ENCODE measurements at regions of chr1 and their contacts with region 1.

Region 1: DNA sequence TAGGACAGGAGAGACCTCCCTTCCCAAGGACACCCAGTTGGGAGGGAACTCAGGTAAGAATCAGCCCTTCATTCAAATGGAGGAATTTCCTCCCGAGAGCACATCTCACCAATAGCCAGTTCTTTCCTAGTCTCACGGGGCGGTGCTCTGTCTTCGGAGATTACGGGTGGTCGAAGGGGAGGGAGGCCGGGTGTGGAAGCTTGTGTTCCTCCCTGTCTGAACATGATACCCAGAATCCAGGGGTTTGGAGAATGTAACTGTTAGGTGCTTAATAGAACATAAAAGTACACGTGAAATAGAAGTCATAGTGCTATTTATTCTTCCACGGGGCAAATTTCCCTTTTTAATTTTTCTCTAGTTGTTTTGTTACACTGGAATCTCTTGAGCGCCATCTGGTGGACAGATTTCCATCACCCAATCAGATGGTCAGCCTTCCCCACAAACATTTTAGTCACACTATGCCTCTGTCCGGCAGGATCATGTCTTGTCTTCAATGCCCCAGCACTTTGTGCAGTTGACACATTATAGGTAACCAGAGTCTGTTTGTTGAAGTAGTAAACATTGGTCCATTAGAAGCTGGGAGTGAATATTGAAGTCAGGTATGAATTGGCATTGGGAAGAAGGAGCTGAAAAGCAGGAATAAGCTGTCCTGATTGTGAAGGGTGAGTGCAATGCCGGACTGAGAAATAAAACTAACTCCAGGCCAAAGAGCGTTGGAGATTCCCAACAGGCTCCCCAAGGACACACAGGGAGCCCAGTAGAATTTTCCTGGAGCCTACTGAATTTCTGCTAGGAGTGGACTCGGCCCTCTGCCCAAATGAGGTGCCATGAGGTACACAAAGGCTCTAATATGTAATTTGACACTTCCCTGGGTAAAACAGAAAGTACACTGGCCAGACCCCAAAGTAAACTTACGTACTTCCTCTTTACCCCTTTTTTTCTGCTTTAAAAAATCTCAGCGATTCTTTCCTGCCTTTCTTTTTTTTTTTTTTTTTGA is 27.6 kb upstream of the ZNF697 start:
- DNase-seq: no peak
- H3K4me3 ChIP-seq: peak overlapping the region; percentile 37
- H3K27me3 ChIP-seq: peaks cover 1% of the 10 kb centered on the region
- CTCF ChIP-seq: peak; percentile 82

Region 2: GRCh38 chr1:119613769-119614720 is 61.6 kb before region 1 on chr1:
- CTCF ChIA-PET with region 1: interaction called, 77 read pairs
- POLR2A ChIA-PET with region 1: no interaction called
- DNase-seq: no peak
- H3K4me3 ChIP-seq: no peak overlapping the region
- H3K27me3 ChIP-seq: no peaks in the 10 kb centered on the region
- CTCF ChIP-seq: peak; percentile 77

Region 3: GRCh38 chr1:119656410-119656955 is 19.2 kb before region 1 on chr1:
- CTCF ChIA-PET with region 1: interaction called, 100 read pairs
- POLR2A ChIA-PET with region 1: no interaction called
- DNase-seq: no peak
- H3K4me3 ChIP-seq: no peak overlapping the region
- H3K27me3 ChIP-seq: no peaks in the 10 kb centered on the region
- CTCF ChIP-seq: no peak

Region 4: DNA sequence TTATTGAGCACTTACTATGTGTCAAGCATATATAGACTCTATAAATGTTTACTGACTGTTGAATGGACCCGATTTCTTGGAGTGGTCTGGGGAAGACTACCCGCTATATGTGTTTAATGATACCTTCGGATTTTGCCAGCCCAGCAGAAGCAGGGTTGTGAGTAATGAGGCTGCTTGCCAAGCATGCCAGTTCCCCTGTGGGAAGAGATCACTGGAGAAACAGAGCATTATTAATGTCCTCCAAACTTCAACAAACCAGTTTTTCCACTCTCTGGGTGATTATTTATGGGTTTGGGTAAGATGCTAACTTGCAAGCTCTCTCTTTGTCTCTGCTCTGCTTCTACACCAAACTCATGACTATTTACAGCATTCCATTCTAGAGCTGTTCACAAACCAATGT is 11.0 kb after region 1 on chr1:
- CTCF ChIA-PET with region 1: interaction called, 46 read pairs
- POLR2A ChIA-PET with region 1: no interaction called
- DNase-seq: no peak
- H3K4me3 ChIP-seq: no peak overlapping the region
- H3K27me3 ChIP-seq: no peaks in the 10 kb centered on the region
- CTCF ChIP-seq: no peak